GM10248 (cell line): ENCODE measurements at regions of chr7 and their contacts with region 1.

Region 1: GRCh38 chr7:135801045-135801693 is 52.6 kb upstream of the FAM180A start:
- DNase-seq: peak; percentile 74
- CTCF ChIP-seq: peak; percentile 83

Region 2: DNA sequence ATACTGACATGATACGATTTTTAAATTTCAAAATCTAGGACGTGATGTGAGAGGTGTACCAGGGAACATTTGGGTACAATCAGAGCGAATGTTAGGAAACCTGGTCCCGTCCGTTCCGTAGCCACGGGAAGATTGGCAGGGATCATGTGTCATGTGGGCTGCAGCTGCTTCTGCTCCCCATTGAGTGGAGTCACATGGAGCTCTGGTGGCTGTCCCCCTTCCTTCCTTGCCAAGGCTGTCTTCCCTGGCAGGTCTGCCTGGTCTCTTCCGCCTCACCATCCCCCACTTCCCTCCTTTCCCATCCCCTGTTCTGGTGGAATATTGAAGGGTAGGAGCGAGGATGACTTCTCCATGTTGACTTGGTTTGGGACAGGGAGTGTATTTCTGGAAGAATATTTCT is 18.8 kb before region 1 on chr7:
- CTCF ChIA-PET with region 1: no interaction called
- POLR2A ChIA-PET with region 1: no interaction called
- DNase-seq: no peak
- CTCF ChIP-seq: no peak

Region 3: GRCh38 chr7:135825406-135825805 is 24.2 kb after region 1 on chr7:
- CTCF ChIA-PET with region 1: no interaction called
- POLR2A ChIA-PET with region 1: no interaction called
- DNase-seq: no peak
- CTCF ChIP-seq: no peak

Region 4: GRCh38 chr7:135843214-135843613 is 42.0 kb after region 1 on chr7:
- CTCF ChIA-PET with region 1: interaction called, 10 read pairs
- POLR2A ChIA-PET with region 1: no interaction called
- DNase-seq: peak; percentile 40
- CTCF ChIP-seq: no peak

Region 5: DNA sequence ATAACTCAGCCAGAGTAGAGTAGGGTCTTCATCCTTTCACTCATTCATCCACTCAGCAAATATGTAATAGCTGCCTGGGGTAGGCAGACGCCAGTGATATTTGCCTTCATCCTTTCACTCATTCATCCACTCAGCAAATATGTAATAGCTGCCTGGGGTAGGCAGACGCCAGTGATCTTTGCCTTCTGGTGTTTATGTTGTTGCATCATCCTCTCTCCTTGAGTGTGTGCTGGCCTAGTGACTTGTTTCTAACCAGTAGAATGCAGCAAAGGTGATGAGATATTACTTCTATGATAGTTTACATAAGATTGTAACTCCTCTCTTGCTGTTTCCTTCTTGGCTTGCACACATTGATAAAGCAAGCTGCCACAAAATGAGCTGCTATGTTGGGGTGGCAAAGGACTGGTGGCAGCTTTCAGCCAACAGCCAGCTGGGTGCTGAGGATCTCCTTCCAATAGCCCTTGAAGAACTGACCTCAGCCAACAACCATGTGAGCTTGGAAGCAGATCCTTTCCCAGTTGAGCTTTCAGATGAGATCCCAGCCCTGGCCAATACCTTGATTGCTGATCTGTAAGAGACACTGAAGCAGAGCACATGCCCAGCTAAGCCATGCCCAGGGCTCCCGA is 199.2 kb after region 1 on chr7:
- CTCF ChIA-PET with region 1: interaction called, 18 read pairs
- POLR2A ChIA-PET with region 1: no interaction called
- DNase-seq: no peak
- CTCF ChIP-seq: no peak

Region 6: GRCh38 chr7:136009488-136010079 is 208.4 kb after region 1 on chr7:
- CTCF ChIA-PET with region 1: interaction called, 113 read pairs
- POLR2A ChIA-PET with region 1: no interaction called
- DNase-seq: peak; percentile 22
- CTCF ChIP-seq: peak; percentile 60

Region 7: DNA sequence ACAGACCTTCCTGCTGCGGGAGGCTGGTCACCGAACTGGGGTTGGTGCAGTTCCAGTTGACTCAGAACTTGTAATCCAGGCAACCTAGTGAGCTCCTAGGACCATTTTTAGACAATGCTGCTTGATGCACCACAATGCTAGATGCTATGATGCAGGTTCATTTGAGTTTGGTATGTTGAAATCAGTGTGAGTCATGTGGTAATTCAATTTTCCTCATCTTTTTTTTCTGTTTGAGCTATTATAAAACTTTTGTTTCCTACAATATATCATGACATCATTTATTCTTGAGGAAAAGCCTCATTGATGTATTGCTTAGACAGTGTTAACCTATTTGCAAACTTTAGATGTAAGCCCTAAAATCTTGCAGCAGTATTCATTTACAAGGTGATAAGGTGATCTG is 216.9 kb after region 1 on chr7:
- CTCF ChIA-PET with region 1: interaction called, 113 read pairs
- POLR2A ChIA-PET with region 1: no interaction called
- DNase-seq: no peak
- CTCF ChIP-seq: no peak